Mammary epithelial cell (primary cell): ENCODE measurements at regions of chr18 and their contacts with region 1.

Region 1: GRCh38 chr18:22223254-22223960 is 54.0 kb downstream of the GATA6 start:
- DNase-seq: peak; percentile 99
- H3K4me3 ChIP-seq: no peak overlapping the region
- H3K27ac ChIP-seq: no peak overlapping the region
- H3K4me1 ChIP-seq: peaks cover 16% of the 10 kb centered on the region
- H3K27me3 ChIP-seq: no peaks in the 10 kb centered on the region
- CTCF ChIP-seq: no peak

Region 2: DNA sequence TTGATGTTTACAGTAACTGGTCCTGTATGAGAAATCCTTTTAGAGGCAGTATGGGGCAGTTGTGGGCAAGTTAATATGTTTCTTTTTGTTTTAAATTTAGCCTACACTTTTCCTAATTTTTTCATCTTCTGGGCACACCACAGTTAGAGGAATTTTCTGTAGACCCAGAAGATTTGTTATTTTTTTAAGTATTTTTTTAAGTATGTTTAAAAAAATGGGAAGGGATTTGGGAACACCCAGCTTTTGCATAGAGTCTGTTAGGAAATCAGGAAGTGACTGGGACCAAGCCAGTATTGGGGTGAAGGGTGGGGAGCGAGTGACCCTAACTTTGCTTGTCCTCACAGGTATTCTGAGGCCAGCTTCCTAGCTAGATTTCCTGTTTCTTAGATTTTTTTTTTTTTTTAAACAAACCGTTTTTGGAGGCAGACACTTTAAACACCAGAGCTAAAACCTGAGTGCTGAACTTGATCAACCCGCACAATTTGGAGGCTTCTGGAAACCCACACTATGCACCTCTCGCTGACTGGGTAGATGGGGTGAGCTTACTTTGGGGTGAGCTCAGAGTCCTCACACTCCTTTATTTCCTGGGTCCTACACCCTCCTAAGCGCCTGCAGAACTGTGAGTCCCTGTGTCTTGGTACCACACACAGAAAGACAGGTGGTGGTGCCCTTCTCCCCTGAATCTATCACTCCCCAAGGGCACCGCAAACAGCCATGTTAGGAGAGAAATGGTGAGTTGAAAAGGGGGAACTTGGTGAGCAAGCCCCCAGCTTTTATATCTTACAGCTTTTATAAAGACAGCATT is 48.9 kb before region 1 on chr18:
- CTCF ChIA-PET with region 1: no interaction called
- dilution Hi-C with region 1: no loop called
- in situ Hi-C with region 1: no loop called
- intact Hi-C with region 1: loop called (anchors 2 kb)
- DNase-seq: no peak
- H3K4me3 ChIP-seq: no peak overlapping the region
- H3K27ac ChIP-seq: no peak overlapping the region
- H3K4me1 ChIP-seq: peaks cover 19% of the 10 kb centered on the region
- H3K27me3 ChIP-seq: no peaks in the 10 kb centered on the region
- CTCF ChIP-seq: peak in 1 of 2 donors; percentile 22